Activated B cell treated with CpG ODN at 0.5 μM for 24 hours (primary cell): ENCODE measurements at regions of chr2 and their contacts with region 1.

Region 1: GRCh38 chr2:227238238-227239237 is 74.1 kb downstream of the COL4A3 start:
- DNase-seq: peak; percentile 28
- ATAC-seq: peak; percentile 37
- H3K4me3 Mint-ChIP-seq: no peak overlapping the region
- H3K27ac Mint-ChIP-seq: no peak overlapping the region
- H3K4me1 Mint-ChIP-seq: no peaks in the 10 kb centered on the region
- H3K27me3 Mint-ChIP-seq: no peaks in the 10 kb centered on the region
- CTCF ChIP-seq: peak; percentile 99

Region 2: GRCh38 chr2:225668606-225669266 is 1569.8 kb before region 1 on chr2:
- CTCF ChIA-PET with region 1: interaction called, 5 read pairs
- POLR2A ChIA-PET with region 1: no interaction called
- intact Hi-C with region 1: loop called (anchors 1 kb)
- DNase-seq: no peak
- ATAC-seq: peak; percentile 79
- H3K4me3 Mint-ChIP-seq: no peak overlapping the region
- H3K27ac Mint-ChIP-seq: no peak overlapping the region
- H3K4me1 Mint-ChIP-seq: no peaks in the 10 kb centered on the region
- H3K27me3 Mint-ChIP-seq: peaks cover 5% of the 10 kb centered on the region
- CTCF ChIP-seq: peak; percentile 29

Region 3: DNA sequence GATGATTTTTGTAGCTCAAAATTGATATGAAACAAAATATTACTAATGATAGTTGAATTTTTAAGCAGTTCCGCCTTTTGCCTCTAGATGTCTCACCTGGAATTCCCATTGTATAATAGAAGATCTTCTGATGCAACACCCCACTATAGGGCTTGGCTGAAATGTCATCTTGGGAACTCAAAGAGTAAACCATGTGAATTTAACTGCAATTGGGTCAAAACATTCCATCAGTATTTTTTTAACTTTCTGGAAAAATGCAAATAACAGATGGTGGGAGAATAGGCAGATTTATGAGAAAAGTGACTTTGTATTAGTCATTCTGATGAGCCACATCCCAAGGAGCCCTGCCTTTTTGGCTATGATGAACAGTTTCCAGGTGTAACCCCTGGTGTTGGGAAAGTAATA is 1349.1 kb before region 1 on chr2:
- CTCF ChIA-PET with region 1: interaction called, 3 read pairs
- POLR2A ChIA-PET with region 1: no interaction called
- intact Hi-C with region 1: loop called (anchors 2 kb)
- DNase-seq: no peak
- ATAC-seq: peak; percentile 47
- H3K4me3 Mint-ChIP-seq: no peak overlapping the region
- H3K27ac Mint-ChIP-seq: no peak overlapping the region
- H3K4me1 Mint-ChIP-seq: no peaks in the 10 kb centered on the region
- H3K27me3 Mint-ChIP-seq: peaks cover 4% of the 10 kb centered on the region
- CTCF ChIP-seq: no peak

Region 4: DNA sequence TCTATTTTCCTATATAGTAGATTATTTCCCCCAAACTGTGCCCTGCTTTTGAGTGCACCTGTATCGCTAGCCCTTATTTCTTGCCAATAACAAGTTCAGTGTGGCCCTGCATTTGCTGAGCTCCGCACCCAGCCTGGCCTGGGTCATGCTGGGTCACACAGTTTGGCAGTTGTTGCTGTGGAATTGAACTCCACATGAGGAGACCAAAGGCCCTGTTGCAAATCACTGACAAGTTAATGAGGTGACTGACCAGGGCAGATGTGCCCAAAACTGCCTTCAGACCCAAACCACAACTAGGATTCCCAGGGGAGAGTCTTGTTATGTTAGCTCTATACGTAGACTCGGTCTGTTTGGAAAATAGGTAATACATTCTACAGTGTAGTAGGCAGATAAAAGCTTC is 105.6 kb before region 1 on chr2:
- CTCF ChIA-PET with region 1: interaction called, 129 read pairs
- POLR2A ChIA-PET with region 1: no interaction called
- intact Hi-C with region 1: loop called (anchors 1 kb)
- DNase-seq: no peak
- ATAC-seq: no peak
- H3K4me3 Mint-ChIP-seq: no peak overlapping the region
- H3K27ac Mint-ChIP-seq: no peak overlapping the region
- H3K4me1 Mint-ChIP-seq: no peaks in the 10 kb centered on the region
- H3K27me3 Mint-ChIP-seq: peaks cover 1% of the 10 kb centered on the region
- CTCF ChIP-seq: no peak

Region 5: DNA sequence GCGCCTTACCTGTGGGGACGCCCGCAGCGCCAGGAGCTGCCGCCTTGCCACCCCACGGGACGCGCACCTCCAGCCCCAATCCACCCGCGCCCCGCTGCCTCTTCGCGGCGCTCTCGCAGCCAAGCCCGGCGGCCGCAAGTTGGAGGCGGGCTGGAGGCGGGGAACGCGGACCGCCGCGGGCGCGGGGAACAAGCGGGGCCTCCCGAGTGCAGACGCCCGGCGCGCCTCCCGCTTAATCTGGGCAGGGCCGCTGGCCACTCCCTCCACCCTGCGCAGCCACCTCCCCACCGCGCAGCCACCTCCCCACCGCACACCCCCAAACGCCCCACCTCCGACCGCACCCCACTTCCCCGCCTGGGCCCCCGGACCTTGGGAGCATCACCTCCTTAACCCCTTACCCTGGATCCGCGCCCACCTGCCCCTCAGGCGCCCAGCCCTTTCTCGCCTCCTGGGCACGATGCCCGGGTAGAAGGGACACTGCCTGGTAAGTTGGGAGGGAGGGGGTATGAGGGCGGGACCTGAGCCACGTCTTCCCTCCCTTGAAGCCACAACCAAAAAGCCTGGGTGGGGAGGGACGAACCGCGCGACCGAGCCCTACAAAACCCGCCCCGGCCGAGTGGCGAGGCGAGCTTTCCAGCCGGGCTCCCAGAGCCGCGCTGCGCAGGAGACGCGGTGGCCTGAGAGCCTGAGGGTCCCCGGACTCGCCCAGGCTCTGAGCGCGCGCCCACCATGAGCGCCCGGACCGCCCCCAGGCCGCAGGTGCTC is 74.4 kb before region 1 on chr2 and contains the starts of genes COL4A3 and COL4A4:
- CTCF ChIA-PET with region 1: interaction called, 4 read pairs
- POLR2A ChIA-PET with region 1: no interaction called
- intact Hi-C with region 1: loop called (anchors 2 kb)
- DNase-seq: peak; percentile 54
- ATAC-seq: peak; percentile 78
- H3K4me3 Mint-ChIP-seq: peak within 1 kb of the TSS; percentile 87
- H3K27ac Mint-ChIP-seq: peak within 1 kb of the TSS; percentile 89
- H3K4me1 Mint-ChIP-seq: peaks cover 44% of the 10 kb centered on the region
- H3K27me3 Mint-ChIP-seq: peaks cover 5% of the 10 kb centered on the region
- CTCF ChIP-seq: no peak
- total RNA-seq, gene COL4A3: 15.5 and 18.3 TPM in 2 replicates
- total RNA-seq, gene COL4A4: 9.3 and 10.9 TPM in 2 replicates

Region 6: GRCh38 chr2:227252831-227253230 is 14.3 kb after region 1 on chr2:
- CTCF ChIA-PET with region 1: interaction called, 11 read pairs
- POLR2A ChIA-PET with region 1: no interaction called
- intact Hi-C with region 1: no loop called
- DNase-seq: no peak
- ATAC-seq: no peak
- H3K4me3 Mint-ChIP-seq: no peak overlapping the region
- H3K27ac Mint-ChIP-seq: no peak overlapping the region
- H3K4me1 Mint-ChIP-seq: no peaks in the 10 kb centered on the region
- H3K27me3 Mint-ChIP-seq: no peaks in the 10 kb centered on the region
- CTCF ChIP-seq: no peak

Region 7: GRCh38 chr2:227748079-227748478 is 509.5 kb after region 1 on chr2:
- CTCF ChIA-PET with region 1: no interaction called
- POLR2A ChIA-PET with region 1: no interaction called
- intact Hi-C with region 1: no loop called
- DNase-seq: no peak
- ATAC-seq: no peak
- H3K4me3 Mint-ChIP-seq: no peak overlapping the region
- H3K27ac Mint-ChIP-seq: no peak overlapping the region
- H3K4me1 Mint-ChIP-seq: no peaks in the 10 kb centered on the region
- H3K27me3 Mint-ChIP-seq: peaks cover 6% of the 10 kb centered on the region
- CTCF ChIP-seq: no peak